Lower leg skin (tissue), 4 donors: ENCODE measurements at regions of chr1 and their contacts with region 1.

Region 1: GRCh38 chr1:63969441-63969901 is 195.7 kb downstream of the ROR1 start:
- DNase-seq: no peak
- H3K4me3 ChIP-seq: no peak overlapping the region
- CTCF ChIP-seq: no peak
- POLR2A ChIP-seq: no peak

Region 2: GRCh38 chr1:63615768-63616420 is 353.6 kb before region 1 on chr1:
- intact Hi-C with region 1: loop called (anchors 5 kb)
- DNase-seq: peak in 1 of 2 donors; percentile 82
- H3K4me3 ChIP-seq: no peak overlapping the region
- CTCF ChIP-seq: peak in 1 of 3 donors; percentile 77
- POLR2A ChIP-seq: no peak

Region 3: DNA sequence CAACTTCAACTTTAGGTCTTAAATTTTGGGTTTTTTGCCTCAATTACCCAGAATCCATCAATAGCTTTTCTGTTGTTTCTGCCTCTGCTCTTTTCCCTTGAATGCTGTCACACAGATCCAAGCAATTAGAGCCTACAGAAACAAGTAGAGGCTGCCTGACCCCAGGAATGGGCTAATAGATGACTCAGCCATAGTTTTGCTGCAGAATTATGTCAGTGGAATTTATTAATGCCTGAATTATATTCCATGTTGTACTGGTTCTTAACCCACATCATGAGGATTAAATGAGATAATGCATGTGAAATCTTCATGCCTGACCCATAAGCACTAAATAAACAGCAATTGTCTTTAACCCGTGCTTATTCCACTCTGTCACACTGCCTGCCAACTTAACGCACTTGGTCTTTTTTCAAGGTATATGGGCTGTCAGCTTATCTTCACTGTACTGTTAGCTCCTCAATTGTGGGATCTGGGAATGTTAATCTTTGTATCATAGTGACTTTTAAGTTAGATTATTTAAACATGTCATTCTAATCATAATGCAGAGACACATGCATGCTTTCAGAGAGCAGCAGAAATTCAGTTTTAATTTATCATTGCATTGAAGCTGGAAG is 17.6 kb after region 1 on chr1:
- intact Hi-C with region 1: no loop called
- DNase-seq: no peak
- H3K4me3 ChIP-seq: no peak overlapping the region
- CTCF ChIP-seq: no peak
- POLR2A ChIP-seq: no peak

Region 4: DNA sequence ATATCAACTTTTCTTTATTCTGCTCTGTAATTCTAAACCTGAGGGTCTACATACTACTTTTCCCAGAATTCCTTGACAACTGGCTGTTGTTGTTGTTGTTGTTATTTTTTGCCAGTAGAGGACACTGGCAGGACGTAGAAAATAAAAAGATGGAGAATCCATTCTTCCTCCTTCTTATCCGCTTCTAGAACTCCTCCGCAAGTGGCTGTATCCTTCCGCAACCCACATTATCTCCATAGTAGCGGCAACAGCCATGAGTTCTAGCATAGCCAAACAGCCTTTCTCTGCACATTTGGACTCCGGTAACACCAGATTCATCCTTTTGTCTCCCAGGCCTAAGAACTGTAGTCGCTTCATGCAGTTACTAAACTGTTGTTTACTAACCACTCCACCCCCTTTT is 409.4 kb after region 1 on chr1:
- intact Hi-C with region 1: no loop called
- DNase-seq: no peak
- H3K4me3 ChIP-seq: no peak overlapping the region
- CTCF ChIP-seq: no peak
- POLR2A ChIP-seq: no peak